Activated T-helper 2 cell treated with anti-CD3 and anti-CD28 coated beads, Interferon-gamma antibody, Interleukin-2, Interleukin-4, amounts not matched to agents 10 μg/mL and 5 μg/mL and 100 μg/mL, durations not matched to agents 14 hours and 24 hours and 36 hours (primary cell): ENCODE measurements at regions of chr5 and their contacts with region 1.

Region 1: GRCh38 chr5:134225618-134226440 is at the start of gene PPP2CA:
- DNase-seq: peak; percentile 100
- H3K4me3 Mint-ChIP-seq: peak within 1 kb of the TSS; percentile 89
- H3K27ac Mint-ChIP-seq: peak within 1 kb of the TSS; percentile 98
- H3K4me1 Mint-ChIP-seq: peaks cover 38% of the 10 kb centered on the region
- H3K27me3 Mint-ChIP-seq: no peaks in the 10 kb centered on the region
- total RNA-seq, gene PPP2CA: 171 and 179 TPM in 2 replicates

Region 2: DNA sequence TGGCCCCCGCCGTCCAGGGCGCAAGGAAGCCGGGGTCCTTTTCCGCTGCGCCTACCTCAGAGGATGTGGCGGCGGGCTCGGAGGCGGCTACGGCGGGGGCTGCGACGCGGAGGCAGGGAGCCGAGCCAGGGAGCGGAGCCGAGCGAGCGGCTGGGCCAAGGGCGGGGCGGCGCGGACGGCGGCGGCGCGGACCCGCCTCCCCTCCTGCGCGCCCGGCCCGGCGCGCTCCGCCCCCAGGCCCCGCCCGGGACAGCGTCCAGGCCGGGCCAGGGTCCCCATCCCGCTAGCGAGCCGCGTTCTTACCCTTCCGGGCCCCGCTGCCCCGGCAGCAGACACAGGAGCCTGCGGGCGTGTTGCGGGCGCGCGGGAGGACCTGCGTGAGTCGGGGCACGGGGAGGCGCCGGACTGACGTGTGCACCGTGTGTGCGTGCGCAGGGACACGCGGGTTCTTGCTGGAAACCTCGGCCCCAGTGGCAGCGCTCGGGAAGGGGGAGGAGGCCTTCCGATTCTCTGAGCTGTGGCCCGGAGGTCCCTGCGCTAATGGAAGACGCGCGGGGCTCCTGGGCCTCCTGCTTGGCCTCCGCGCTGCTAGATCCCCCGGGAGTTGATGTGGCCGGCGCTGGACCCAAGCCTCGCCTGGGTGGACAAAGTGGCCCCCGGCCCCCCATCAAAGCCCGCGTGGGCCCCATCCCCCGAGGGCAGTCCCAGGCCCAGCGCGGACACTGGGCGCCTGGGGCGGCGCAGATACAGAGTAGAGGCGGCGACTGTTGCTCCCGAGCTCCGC is 221.0 kb before region 1 on chr5 and contains the start of gene VDAC1:
- intact Hi-C with region 1: loop called (anchors 1 kb)
- DNase-seq: peak; percentile 81
- H3K4me3 Mint-ChIP-seq: peak within 1 kb of the TSS; percentile 92
- H3K27ac Mint-ChIP-seq: peak within 1 kb of the TSS; percentile 97
- H3K4me1 Mint-ChIP-seq: peaks cover 40% of the 10 kb centered on the region
- H3K27me3 Mint-ChIP-seq: no peaks in the 10 kb centered on the region
- total RNA-seq, gene VDAC1: 455 and 459 TPM in 2 replicates

Region 3: GRCh38 chr5:134176511-134177368 is 49.1 kb before region 1 on chr5 and contains the start of gene SKP1:
- intact Hi-C with region 1: loop called (anchors 1 kb)
- DNase-seq: peak; percentile 85
- H3K4me3 Mint-ChIP-seq: peak within 1 kb of the TSS; percentile 97
- H3K27ac Mint-ChIP-seq: peak within 1 kb of the TSS; percentile 98
- H3K4me1 Mint-ChIP-seq: peaks cover 23% of the 10 kb centered on the region
- H3K27me3 Mint-ChIP-seq: peaks cover 8% of the 10 kb centered on the region
- total RNA-seq, gene SKP1: 254 and 257 TPM in 2 replicates

Region 4: DNA sequence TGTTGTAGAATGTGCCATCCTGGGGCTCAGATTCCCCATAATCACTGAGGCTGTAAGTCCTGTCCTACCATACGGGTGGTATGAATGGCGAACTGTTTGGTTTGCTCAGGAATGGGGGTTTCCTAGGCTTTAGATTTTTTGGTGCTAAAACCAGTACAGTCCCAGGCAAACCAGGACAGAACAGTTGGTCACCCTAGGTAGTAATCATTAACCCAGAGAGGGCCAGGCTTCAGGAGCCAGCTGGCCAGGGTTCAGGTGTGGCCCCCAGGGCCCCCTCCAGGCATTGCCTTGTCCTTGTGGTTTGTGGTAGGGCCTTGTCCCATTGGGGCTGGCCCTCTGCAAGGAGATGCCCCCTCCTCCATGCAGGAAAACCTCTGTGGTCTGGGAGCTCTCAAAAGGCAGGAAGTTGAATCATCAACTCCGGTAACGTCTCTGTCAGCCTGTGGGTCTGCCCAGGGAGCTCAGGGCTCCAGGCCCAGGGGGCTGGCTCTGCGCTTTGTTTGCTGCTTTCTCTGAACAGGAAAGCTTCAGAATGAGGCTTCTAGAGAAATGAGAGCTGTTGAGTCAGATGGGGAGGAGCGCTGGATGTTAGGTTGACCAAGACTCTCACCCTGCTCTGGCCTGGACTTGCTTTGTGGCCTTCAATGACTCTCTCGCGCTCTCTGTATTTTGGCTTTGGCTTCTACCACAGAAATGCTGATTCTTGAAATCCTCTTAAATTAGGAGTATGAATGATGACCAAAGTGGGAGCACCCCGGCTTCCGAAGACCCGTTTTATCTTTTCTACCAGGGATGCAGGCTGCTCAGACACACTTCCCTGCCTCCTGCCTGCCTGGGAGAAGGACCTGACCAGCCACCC is 277.5 kb after region 1 on chr5:
- intact Hi-C with region 1: loop called (anchors 1 kb)
- DNase-seq: peak; percentile 67
- H3K4me3 Mint-ChIP-seq: peak overlapping the region; percentile 64
- H3K27ac Mint-ChIP-seq: peak overlapping the region; percentile 99
- H3K4me1 Mint-ChIP-seq: peaks cover 40% of the 10 kb centered on the region
- H3K27me3 Mint-ChIP-seq: no peaks in the 10 kb centered on the region